Ovary (tissue), 10 donors: ENCODE measurements at regions of chr6 and their contacts with region 1.

Region 1: GRCh38 chr6:128406453-128406852 is 113.9 kb downstream of the PTPRK start:
- DNase-seq: no peak
- H3K4me3 ChIP-seq: no peak overlapping the region
- H3K27ac ChIP-seq: no peak overlapping the region
- H3K4me1 ChIP-seq: peaks cover 2% of the 10 kb centered on the region
- H3K27me3 ChIP-seq: no peaks in the 10 kb centered on the region
- CTCF ChIP-seq: no peak
- EP300 ChIP-seq: no peak
- POLR2A ChIP-seq: no peak

Region 2: DNA sequence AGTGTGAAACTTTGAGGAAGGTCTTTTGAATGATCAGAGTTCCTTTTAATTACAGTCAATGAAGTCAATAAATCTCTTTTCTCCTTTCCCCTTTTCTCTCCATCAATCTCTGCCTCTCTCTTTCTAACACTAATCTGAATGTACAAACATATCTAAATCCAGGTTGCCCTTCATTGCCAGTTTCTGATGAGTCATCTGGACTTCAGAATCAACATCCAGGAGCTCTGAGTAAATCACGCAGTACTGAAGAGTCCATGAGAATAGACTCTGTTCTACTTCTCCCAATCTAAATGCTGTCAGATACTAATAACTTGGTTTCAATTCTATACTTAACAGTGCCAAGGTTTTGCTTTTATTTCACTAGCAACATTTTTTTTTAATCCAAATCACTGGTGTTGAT is 266.9 kb before region 1 on chr6:
- intact Hi-C with region 1: loop called in 1 of 4 experiments (anchors 5 kb)
- DNase-seq: no peak
- H3K4me3 ChIP-seq: no peak overlapping the region
- H3K27ac ChIP-seq: no peak overlapping the region
- H3K4me1 ChIP-seq: no peaks in the 10 kb centered on the region
- H3K27me3 ChIP-seq: no peaks in the 10 kb centered on the region
- CTCF ChIP-seq: no peak
- EP300 ChIP-seq: no peak
- POLR2A ChIP-seq: no peak

Region 3: GRCh38 chr6:128667339-128667858 is 260.9 kb after region 1 on chr6:
- intact Hi-C with region 1: no loop called
- DNase-seq: no peak
- H3K4me3 ChIP-seq: no peak overlapping the region
- H3K27ac ChIP-seq: no peak overlapping the region
- H3K4me1 ChIP-seq: no peaks in the 10 kb centered on the region
- H3K27me3 ChIP-seq: no peaks in the 10 kb centered on the region
- CTCF ChIP-seq: no peak
- EP300 ChIP-seq: no peak
- POLR2A ChIP-seq: no peak